Breast epithelium (tissue), 4 donors: ENCODE measurements at regions of chr19 and their contacts with region 1.

Region 1: GRCh38 chr19:49409441-49410029 is 13.7 kb downstream of the PTH2 start:
- DNase-seq: no peak
- H3K4me3 ChIP-seq: no peak overlapping the region
- H3K27ac ChIP-seq: no peak overlapping the region
- H3K4me1 ChIP-seq: no peaks in the 10 kb centered on the region
- H3K27me3 ChIP-seq: no peaks in the 10 kb centered on the region
- CTCF ChIP-seq: no peak
- POLR2A ChIP-seq: no peak

Region 2: DNA sequence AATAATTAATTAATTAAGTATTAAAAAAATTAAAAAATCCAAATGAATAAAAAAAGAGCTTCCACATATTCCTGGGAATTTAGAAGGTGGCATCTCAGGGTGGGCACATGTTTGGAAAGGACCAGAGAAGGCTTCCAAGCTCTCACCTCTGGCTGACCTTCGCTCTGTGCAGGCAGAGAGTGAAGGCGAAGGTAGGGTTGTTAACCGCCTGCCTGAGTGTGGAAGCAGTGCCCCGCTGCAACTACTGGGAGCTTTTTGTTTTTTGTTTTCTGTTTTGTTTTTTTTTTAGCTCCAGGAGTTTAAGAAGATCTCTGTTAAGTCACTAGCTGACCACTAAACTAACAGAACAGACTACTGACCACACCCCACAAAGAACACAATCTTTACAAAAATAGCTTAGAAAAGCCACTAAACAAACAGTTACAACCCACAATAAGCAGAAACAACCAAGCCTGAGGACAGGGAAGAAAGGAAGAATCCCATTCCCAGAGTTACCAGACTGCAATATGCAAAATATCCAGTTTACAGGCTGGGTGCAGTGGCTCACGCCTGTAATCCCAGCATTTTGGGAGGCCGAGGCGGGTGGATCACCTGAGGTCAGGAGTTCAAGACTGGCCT is 1848.0 kb before region 1 on chr19:
- intact Hi-C with region 1: no loop called
- DNase-seq: no peak
- H3K4me3 ChIP-seq: no peak overlapping the region
- H3K27ac ChIP-seq: no peak overlapping the region
- H3K4me1 ChIP-seq: no peaks in the 10 kb centered on the region
- H3K27me3 ChIP-seq: no peaks in the 10 kb centered on the region
- CTCF ChIP-seq: no peak
- POLR2A ChIP-seq: no peak

Region 3: DNA sequence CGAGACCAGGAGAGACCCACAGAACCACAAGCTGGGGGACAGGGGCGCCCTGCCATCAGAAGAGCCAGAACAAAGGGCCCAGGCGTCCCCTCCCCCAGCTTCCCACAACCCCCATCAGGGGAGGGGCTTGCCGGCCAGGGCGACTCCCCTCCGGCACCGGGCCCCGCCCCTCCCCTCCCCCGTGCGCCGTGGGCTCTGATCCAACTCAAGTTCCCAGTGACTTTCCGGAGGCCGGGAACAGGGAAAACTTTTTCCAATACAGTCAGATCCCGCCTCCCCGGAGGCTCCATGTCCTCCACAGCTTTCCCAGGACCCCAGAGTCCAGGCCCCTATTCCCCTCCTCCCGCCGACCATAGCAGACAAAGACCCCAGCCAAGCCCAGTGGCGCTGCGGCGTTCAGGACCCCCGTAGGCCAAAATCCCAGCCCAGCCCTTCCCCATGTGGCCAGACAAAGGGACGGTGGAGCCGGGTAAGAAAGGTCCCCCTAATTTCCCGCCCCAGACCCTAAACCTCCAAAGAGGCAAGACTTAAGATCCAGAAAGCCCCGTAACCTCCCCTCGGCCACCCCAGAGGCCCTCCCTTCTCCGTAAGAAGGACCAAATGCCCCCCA is 48.0 kb before region 1 on chr19:
- intact Hi-C with region 1: no loop called
- DNase-seq: peak; percentile 65 to 86
- H3K4me3 ChIP-seq: peak overlapping the region; percentile 78 to 89 (median 86)
- H3K27ac ChIP-seq: peak overlapping the region; percentile 93 to 98
- H3K4me1 ChIP-seq: peaks cover 0 to 3% of the 10 kb centered on the region in 2 donors
- H3K27me3 ChIP-seq: no peaks in the 10 kb centered on the region
- CTCF ChIP-seq: no peak
- POLR2A ChIP-seq: no peak

Region 4: GRCh38 chr19:50569938-50570540 is 1160.5 kb after region 1 on chr19:
- intact Hi-C with region 1: loop called (anchors 5 kb)
- DNase-seq: no peak
- H3K4me3 ChIP-seq: no peak overlapping the region
- H3K27ac ChIP-seq: no peak overlapping the region
- H3K4me1 ChIP-seq: no peaks in the 10 kb centered on the region
- H3K27me3 ChIP-seq: peaks cover 8 to 67% of the 10 kb centered on the region in 2 donors
- CTCF ChIP-seq: no peak
- POLR2A ChIP-seq: no peak